GM12878 (cell line): ENCODE measurements at regions of chr11 and their contacts with region 1.

Region 1: DNA sequence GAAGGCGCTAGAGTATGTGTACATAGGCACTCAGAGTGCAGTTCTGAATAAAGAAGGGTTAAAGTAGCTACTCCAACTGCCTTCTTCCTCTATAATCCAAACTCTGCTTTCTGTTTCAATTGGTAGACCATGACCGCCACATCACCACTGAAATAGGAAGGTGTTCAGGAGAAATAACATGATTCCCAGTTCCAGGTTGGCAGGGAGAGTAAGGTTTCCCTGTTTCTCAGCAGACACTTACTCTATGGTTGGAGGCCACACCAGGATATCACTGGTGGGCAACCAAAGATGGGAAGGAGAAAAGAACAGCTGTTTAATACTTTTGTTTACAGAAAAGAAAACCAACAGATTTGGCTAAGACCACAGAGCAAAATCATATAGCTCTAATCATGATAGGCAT is 37.9 kb downstream of the PAK1 start:
- DNase-seq: no peak
- ATAC-seq: peak; percentile 55
- H3K4me3 ChIP-seq: peak overlapping the region; percentile 50; the same call in 1 of the 2 replicates
- H3K27ac ChIP-seq: peak overlapping the region; percentile 35; the same call in 1 of the 2 replicates
- H3K4me1 ChIP-seq: peaks cover 33% of the 10 kb centered on the region; the same call in 1 of the 2 replicates
- H3K27me3 ChIP-seq: no peaks in the 10 kb centered on the region
- CTCF ChIP-seq: no peak
- EP300 ChIP-seq: no peak
- POLR2A ChIP-seq: no peak
- RAD21 ChIP-seq: no peak

Region 2: GRCh38 chr11:77424644-77425043 is 11.3 kb before region 1 on chr11:
- CTCF ChIA-PET with region 1: interaction called, 7 read pairs
- POLR2A ChIA-PET with region 1: interaction called, 6 read pairs
- RAD21 ChIA-PET with region 1: interaction called, 6 read pairs
- SMC1A ChIA-PET with region 1: interaction called, 20 read pairs
- in situ Hi-C with region 1: no loop called
- intact Hi-C with region 1: no loop called
- DNase-seq: no peak
- ATAC-seq: no peak
- H3K4me3 ChIP-seq: no peak overlapping the region
- H3K27ac ChIP-seq: no peak overlapping the region
- H3K4me1 ChIP-seq: peaks cover under 1% of the 10 kb centered on the region
- H3K27me3 ChIP-seq: no peaks in the 10 kb centered on the region
- CTCF ChIP-seq: no peak
- EP300 ChIP-seq: no peak
- POLR2A ChIP-seq: no peak
- RAD21 ChIP-seq: no peak